Right ventricle myocardium inferior (tissue), 1 donor: ENCODE measurements at regions of chr1 and their contacts with region 1.

Region 1: DNA sequence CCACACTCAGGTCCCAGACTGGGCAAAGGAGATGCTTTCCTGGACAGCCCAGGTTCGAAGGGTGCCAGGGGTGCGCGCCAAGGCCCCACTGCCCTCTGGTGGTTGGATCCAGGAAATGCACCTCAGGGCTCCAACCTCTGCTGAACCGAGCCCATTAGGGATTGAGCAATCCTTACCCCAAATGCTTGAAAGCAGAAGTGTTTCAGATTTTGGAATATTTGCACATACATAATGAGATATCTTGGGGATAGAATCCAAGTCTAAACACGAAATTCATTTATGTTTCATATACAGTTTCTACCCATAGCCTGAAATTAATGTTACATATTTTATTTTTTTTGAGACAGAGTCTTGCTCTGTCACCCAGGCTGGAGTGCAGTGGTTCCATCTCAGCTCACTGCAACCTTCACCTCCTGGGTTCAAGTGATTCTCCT is 57.4 kb downstream of the SLC9A1 start:
- DNase-seq: peak; percentile 90
- ATAC-seq: peak; percentile 72

Region 2: GRCh38 chr1:26959722-26960615 is 137.5 kb before region 1 on chr1 and contains the start of gene KDF1:
- intact Hi-C with region 1: loop called (anchors 10 kb)
- DNase-seq: no peak
- ATAC-seq: peak; percentile 36
- total RNA-seq, gene KDF1: 0.68 TPM

Region 3: DNA sequence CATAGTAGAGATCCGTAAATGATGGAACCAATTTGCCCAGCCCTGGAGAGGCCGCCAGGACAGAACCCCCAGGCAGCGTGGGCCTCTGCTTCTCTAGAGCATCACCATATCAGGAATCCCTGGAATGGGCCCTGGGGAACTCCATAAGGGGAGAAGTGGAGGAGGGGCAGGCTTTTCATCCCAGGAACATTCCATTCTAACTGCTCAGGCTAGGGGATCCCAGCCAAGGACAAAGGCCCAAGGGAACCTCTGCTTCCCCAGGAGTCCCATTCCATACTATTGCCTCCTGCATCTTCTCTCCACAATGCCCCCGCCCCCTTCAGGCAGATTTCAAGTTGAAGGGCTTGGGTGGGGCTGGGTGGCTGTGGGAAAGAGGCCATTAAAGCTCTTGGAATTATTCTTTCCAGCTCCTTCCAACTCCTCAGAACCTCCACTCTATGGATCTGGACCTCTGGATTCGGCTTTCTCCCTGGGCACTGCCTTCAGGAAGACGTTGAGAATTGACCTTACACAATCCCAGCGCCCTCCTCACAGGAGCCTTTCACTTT is 98.0 kb before region 1 on chr1:
- intact Hi-C with region 1: loop called (anchors 1 kb)
- DNase-seq: no peak
- ATAC-seq: peak; percentile 78

Region 4: DNA sequence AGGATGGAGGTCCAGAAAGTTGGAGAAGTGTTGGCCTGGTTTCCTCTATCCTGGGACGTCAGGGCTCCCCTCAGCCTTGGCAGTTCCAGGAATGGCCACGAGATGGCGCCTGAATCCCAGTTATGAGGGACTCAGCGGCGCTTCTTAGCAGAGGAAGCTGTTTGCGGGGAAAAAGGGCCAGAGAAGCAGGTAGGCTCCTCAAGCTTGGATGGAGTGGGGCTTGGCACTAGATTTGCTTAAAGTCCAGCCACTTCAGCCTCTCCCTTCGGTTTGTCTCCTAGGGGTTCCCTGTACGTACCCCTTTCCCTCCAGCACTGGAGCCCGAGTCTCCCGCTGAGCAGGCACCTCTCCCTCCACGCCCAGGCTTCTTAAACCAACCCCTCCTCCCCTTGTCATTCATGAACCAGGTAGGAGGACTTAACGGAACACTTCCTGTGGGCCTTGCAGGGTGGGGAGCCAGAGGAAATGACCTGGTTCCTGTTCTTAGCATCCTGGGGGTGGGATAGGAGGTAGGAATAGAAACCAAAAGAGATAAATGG is 52.8 kb before region 1 on chr1:
- intact Hi-C with region 1: loop called (anchors 1 kb)
- DNase-seq: peak; percentile 92
- ATAC-seq: peak; percentile 92

Region 5: DNA sequence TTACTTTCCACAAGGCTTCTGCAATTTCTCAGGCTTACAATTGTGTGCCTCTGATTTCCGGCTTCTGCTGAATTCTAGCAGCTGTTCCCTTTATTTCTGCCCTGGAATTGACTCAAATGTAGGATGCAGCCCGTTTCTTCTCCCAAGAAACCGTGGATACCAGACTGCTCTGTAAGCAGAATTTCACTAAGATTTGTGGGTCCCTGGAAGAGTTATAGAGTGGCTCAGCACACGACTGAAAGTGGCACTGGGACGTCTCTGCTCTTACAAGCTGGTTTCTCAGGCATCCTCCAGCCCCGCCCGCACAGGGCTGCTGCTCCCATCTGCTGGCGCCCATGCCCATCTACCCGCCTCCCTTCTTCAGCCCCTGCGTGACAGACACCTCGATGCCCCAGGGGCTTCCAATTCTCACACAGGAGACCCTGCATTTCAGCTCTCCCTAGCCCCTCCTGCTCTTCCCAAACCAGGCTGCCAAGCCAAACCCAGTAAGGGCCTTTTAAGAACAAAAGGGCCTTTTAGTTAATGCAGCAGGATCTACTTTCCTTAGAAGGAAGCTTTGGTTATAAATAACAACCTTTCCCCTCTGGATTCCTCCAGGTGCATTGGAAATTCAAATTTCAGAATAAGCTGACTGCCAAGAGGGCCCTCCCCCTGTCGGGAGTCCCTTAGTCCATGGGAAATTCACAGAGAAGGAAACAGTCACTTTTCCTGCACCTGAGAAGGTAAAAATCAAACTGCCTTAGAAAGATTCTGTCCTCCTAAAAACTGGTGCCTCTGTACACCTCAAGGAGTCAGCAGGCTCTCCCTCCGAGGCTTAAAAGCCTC is 39.5 kb before region 1 on chr1:
- intact Hi-C with region 1: no loop called
- DNase-seq: no peak
- ATAC-seq: no peak

Region 6: GRCh38 chr1:27136998-27137542 is 39.6 kb after region 1 on chr1:
- intact Hi-C with region 1: no loop called
- DNase-seq: peak; percentile 93
- ATAC-seq: no peak